GM10248 (cell line): ENCODE measurements at regions of chr11 and their contacts with region 1.

Region 1: DNA sequence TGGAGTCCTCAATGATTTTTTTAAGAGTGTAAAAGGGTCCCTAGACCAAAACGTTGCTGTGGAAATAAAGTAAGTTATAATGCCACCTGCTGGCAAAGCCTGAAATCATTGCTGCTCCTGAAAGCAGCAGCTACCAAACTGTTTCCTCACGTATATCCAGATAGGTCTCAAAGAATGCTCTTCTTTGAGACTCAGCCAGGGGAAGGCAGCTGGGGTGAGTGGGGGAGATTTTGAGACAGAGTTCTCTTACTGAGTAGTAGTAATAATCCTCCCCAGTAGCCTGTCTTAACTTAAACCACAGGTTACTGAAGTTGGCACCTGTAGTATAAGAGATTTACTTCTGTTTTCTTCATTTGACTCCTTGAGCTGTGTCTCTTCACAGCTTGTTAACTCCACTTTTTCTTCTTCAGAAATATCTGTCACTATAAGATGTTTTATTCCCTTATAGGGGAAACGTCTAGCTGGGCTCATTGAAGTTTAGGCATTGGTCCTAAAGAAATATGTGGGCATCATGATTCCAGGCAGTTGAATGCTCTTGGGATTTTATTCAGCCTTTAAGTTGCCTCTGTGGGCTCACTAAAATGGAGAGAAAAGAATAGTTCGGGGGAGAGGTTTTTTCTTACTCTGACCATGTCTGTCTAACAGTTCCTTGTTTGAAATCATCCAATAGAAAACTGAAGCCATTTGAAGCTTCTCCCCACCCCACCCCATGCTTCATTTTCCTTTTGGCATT is 77.9 kb downstream of the BTBD10 start:
- DNase-seq: peak; percentile 31
- CTCF ChIP-seq: peak; percentile 66

Region 2: GRCh38 chr11:13368041-13368446 is 17.0 kb before region 1 on chr11:
- CTCF ChIA-PET with region 1: interaction called, 10 read pairs
- POLR2A ChIA-PET with region 1: no interaction called
- DNase-seq: no peak
- CTCF ChIP-seq: no peak